ENCODE measurements at regions of chr2 and their contacts with region 1.

Region 1: GRCh38 chr2:165953655-165954606 is at the start of gene TTC21B:
- DNase-seq: peak; percentile 92
- ATAC-seq: peak; percentile 95
- H3K4me3 ChIP-seq: peak within 1 kb of the TSS; percentile 66 to 75
- H3K27ac ChIP-seq: peak within 1 kb of the TSS; percentile 31; the same call in 1 of the 2 replicates
- H3K4me1 ChIP-seq: peaks cover 0 to 15% of the 10 kb centered on the region in 2 experiments; a peak in 2 of 4 replicates
- H3K27me3 ChIP-seq: no peaks in the 10 kb centered on the region
- CTCF ChIP-seq: peak; percentile 65 to 74 (median 71)
- POLR2A ChIP-seq: peak; percentile 42
- RAD21 ChIP-seq: peak; percentile 57
- total RNA-seq, gene TTC21B: 12.2 TPM

Region 2: DNA sequence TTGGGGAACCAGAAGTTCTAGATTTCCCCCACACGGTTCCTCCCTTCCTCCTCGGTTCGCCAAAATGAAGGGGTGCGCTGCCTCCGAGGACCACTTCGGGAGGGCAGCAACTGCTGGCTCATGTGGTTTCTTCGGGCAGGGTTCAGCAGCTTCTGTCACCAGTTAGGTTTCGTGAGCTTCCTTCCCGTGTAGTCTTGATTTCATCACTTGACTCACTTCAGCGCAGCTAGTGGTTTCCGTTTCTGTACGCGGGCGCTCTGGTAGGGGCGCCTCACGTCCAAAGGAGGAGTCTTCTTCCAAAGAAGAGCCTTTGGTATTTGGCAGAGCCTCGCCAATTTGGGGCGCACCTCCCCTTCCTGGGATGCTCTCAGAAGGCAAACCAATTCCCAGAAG is 159.4 kb before region 1 on chr2:
- CTCF ChIA-PET with region 1: no interaction called
- POLR2A ChIA-PET with region 1: no interaction called
- RAD21 ChIA-PET with region 1: no interaction called
- intact Hi-C with region 1: loop called (anchors 5 kb)
- DNase-seq: peak; percentile 6
- ATAC-seq: peak; percentile 46
- H3K4me3 ChIP-seq: peak overlapping the region; percentile 64 to 69
- H3K27ac ChIP-seq: peak overlapping the region; percentile 6; the same call in 1 of the 2 replicates
- H3K4me1 ChIP-seq: peaks cover 3 to 31% of the 10 kb centered on the region in 2 experiments; a peak in 2 of 4 replicates
- H3K27me3 ChIP-seq: no peaks in the 10 kb centered on the region
- CTCF ChIP-seq: no peak
- POLR2A ChIP-seq: no peak
- RAD21 ChIP-seq: no peak

Region 3: GRCh38 chr2:166127217-166128155 is 173.6 kb after region 1 on chr2 and contains the start of gene SCN1A:
- CTCF ChIA-PET with region 1: interaction called, 26 read pairs
- POLR2A ChIA-PET with region 1: interaction called, 6 read pairs
- RAD21 ChIA-PET with region 1: no interaction called
- intact Hi-C with region 1: loop called (anchors 1 kb)
- DNase-seq: peak; percentile 32
- ATAC-seq: peak; percentile 70
- H3K4me3 ChIP-seq: no peak within 1 kb of the TSS
- H3K27ac ChIP-seq: no peak within 1 kb of the TSS
- H3K4me1 ChIP-seq: no peaks in the 10 kb centered on the region
- H3K27me3 ChIP-seq: peaks cover 62% of the 10 kb centered on the region
- CTCF ChIP-seq: peak; percentile 43 to 73 (median 49); a peak in 4 of 6 replicates
- POLR2A ChIP-seq: no peak
- RAD21 ChIP-seq: peak; percentile 70
- total RNA-seq, gene SCN1A: not detected

Measured in HCT116 (cell line).